ENCODE measurements at regions of chr14 and their contacts with region 1.

Region 1: GRCh38 chr14:87805315-87805723 is 187.7 kb downstream of the GALC start:
- DNase-seq: peak; percentile 41
- H3K4me3 ChIP-seq: no peak overlapping the region; a peak in 1 of 4 replicates
- H3K27ac ChIP-seq: no peak overlapping the region
- H3K4me1 ChIP-seq: no peaks in the 10 kb centered on the region
- H3K27me3 ChIP-seq: no peaks in the 10 kb centered on the region
- CTCF ChIP-seq: peak; percentile 59
- EP300 ChIP-seq: no peak
- RAD21 ChIP-seq: peak; percentile 51

Region 2: GRCh38 chr14:87566991-87567390 is 238.3 kb before region 1 on chr14:
- CTCF ChIA-PET with region 1: no interaction called
- POLR2A ChIA-PET with region 1: no interaction called
- DNase-seq: no peak
- H3K4me3 ChIP-seq: no peak overlapping the region
- H3K27ac ChIP-seq: no peak overlapping the region
- H3K4me1 ChIP-seq: no peaks in the 10 kb centered on the region
- H3K27me3 ChIP-seq: no peaks in the 10 kb centered on the region
- CTCF ChIP-seq: no peak
- EP300 ChIP-seq: no peak
- RAD21 ChIP-seq: no peak

Region 3: DNA sequence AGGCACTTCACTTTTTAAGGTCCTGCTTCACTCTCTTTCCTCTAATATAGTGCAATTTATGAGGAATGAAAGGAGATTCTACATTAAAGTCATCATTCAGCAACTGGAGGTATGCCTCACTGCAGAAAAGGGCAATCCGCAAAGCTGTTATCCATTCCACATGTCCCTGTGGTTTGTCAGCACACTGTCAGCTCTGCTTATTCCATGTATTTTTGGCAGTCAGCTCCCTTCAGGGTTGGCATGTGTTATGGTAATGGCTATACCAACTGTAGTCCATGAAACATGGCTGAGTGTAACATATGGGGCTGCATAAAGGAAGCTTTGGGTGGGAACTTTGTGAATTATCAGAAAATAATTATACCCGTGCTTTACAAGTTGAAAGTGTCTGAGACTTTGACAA is 33.6 kb after region 1 on chr14:
- CTCF ChIA-PET with region 1: interaction called, 10 read pairs
- POLR2A ChIA-PET with region 1: no interaction called
- DNase-seq: no peak
- H3K4me3 ChIP-seq: no peak overlapping the region
- H3K27ac ChIP-seq: no peak overlapping the region
- H3K4me1 ChIP-seq: no peaks in the 10 kb centered on the region
- H3K27me3 ChIP-seq: no peaks in the 10 kb centered on the region
- CTCF ChIP-seq: no peak
- EP300 ChIP-seq: no peak
- RAD21 ChIP-seq: no peak

Region 4: GRCh38 chr14:87852107-87852506 is 46.8 kb after region 1 on chr14:
- CTCF ChIA-PET with region 1: no interaction called
- POLR2A ChIA-PET with region 1: no interaction called
- DNase-seq: no peak
- H3K4me3 ChIP-seq: no peak overlapping the region
- H3K27ac ChIP-seq: no peak overlapping the region
- H3K4me1 ChIP-seq: no peaks in the 10 kb centered on the region
- H3K27me3 ChIP-seq: no peaks in the 10 kb centered on the region
- CTCF ChIP-seq: no peak
- EP300 ChIP-seq: no peak
- RAD21 ChIP-seq: no peak